PC-9 (cell line): ENCODE measurements at regions of chr12 and their contacts with region 1.

Region 1: DNA sequence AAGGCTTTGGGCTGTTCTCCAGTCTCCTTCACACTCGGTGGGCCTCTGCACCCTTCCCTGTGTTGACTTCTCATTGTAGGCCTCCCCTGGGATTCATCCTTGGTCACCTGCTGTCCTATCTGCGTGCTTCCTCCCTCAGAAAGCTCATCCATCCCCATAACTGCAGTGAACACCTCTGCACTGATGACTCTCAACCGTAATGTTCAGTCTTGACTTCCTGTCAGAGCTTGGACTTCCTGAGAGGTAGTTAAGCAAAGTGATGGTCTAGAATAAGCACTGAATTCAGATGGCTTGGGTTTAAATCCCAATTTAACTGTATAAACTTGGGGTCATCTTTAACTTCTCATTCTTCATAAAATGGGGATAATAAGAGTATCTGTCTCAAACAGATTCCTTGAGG is 13.6 kb upstream of the MDM1 start:
- DNase-seq: no peak
- H3K4me3 ChIP-seq: no peak overlapping the region
- H3K27ac ChIP-seq: no peak overlapping the region
- H3K4me1 ChIP-seq: no peaks in the 10 kb centered on the region
- H3K27me3 ChIP-seq: peaks cover 14% of the 10 kb centered on the region
- CTCF ChIP-seq: no peak

Region 2: DNA sequence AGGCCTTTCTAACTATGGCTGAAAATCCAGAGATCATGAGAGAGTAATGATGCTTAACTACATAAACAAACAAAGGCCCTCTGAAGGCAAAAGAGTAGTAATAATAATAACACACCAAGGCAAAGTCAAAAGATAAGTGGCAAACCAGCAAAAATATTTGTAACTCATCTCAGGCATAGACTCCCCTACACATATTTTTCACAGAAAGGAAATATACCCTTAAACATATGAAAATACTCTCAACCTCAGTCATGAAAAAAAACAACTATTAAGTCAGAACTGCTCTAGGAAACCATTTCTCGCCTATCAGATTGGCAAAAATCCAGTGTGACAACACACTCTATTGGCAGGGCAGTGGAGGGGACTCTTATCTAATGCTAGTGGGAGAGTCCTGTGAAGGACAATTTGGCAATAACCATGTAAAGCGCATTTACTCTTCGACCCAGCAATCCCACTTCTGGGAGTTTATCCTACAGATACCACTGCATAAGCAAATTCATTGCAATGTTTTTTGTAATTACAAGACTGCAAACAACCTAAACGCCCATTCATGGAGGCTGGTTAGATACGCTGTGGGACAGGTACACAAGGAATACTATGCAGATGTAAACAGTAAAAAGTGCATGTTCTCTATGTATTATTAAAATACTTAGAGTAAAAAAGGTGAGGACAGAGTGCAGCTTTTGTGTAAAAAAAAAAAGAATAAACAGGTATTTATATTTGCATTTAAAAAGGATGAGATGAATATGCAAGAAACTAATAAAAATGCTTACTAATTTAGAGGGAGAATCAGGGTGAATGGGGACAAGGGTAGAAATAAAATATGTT is 66.3 kb before region 1 on chr12:
- CTCF ChIA-PET with region 1: no interaction called
- POLR2A ChIA-PET with region 1: no interaction called
- intact Hi-C with region 1: no loop called
- DNase-seq: no peak
- H3K4me3 ChIP-seq: no peak overlapping the region
- H3K27ac ChIP-seq: no peak overlapping the region
- H3K4me1 ChIP-seq: peaks cover 19% of the 10 kb centered on the region
- H3K27me3 ChIP-seq: no peaks in the 10 kb centered on the region
- CTCF ChIP-seq: no peak

Region 3: DNA sequence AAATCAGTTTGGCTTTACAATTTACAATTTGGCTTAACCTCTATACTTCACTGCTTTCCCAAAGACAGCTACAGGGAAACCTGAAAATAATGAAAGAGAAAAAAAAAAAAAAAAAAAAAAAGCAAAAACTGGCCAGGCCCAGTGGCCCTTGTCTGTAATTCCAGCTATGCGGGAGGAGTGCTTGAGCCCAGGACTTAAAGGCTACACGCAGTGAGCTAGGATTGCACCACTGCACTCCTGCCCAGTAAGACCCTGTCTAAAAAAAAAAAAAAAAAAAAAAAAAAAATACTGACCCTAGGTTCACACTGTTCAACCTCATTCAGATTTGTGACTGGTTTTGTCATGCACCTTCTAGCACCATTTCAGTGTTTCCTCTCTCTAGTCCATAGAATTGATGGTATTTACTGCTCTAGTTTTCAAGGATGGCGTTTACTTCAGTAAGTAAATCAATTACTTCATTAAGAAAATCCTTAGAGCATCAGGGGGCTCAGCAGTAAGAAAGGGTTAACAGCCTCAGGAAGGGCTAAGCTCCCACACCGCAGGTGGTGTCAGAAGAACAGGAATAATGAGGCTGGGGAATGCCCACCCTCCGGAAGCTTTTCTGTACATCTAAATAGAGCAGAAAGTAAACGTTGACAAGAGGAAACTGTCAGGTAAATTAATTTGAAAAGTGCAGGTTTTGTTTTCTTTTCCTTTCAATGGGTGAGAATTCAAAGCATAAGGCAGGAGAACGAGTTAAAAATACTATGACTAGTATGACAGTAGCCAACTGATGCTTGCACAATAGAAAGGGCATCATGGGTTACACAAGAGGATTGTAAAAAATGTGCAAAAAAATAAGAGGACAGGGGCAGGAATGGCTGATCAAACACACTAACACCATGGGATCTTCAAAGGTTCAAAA is 101.4 kb after region 1 on chr12:
- CTCF ChIA-PET with region 1: no interaction called
- POLR2A ChIA-PET with region 1: interaction called, 30 read pairs
- intact Hi-C with region 1: no loop called
- DNase-seq: no peak
- H3K4me3 ChIP-seq: no peak overlapping the region
- H3K27ac ChIP-seq: no peak overlapping the region
- H3K4me1 ChIP-seq: no peaks in the 10 kb centered on the region
- H3K27me3 ChIP-seq: no peaks in the 10 kb centered on the region
- CTCF ChIP-seq: no peak